ENCODE measurements at regions of chr12 and their contacts with region 1.

Region 1: DNA sequence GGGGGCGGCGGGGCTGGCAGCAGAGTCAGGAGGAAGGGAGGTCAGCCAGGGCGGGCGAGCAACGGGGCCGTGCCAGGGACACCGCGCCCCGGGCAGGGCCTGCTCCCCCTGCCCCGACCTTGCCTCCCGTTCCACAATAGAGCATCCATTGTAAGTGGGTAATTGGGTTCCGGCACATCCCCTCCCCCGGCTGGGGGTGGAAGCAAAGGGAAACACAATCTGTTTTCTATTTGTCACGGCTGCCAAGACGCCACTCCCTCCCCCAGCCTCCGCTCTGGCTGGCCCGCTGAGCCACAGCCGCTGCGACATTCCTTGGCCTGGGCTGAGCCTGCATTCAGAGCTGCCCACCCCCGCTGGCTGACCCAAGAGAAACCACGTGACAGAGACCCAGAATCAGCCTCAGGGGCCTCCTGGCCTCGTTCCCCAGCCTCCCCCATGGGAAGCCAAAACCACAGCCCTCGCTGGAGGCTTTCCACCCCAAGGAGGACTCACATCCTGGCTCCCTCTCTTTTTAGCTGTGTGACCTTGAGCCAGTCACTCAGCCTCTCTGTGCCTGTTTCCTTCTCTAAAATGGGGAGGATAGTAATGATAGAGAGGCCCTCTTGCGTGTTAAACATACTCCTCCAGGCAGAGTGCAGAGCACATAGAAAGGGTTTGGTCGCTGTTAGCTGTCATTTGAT is 117.6 kb downstream of the SCARB1 start:
- DNase-seq: peak; percentile 77 to 98
- H3K4me3 ChIP-seq: peak overlapping the region in 1 of 2 donors; percentile 2
- H3K27ac ChIP-seq: peak overlapping the region; percentile 83 to 89
- H3K4me1 ChIP-seq: peaks cover 8 to 12% of the 10 kb centered on the region in 2 donors
- H3K27me3 ChIP-seq: no peaks in the 10 kb centered on the region
- CTCF ChIP-seq: no peak

Region 2: DNA sequence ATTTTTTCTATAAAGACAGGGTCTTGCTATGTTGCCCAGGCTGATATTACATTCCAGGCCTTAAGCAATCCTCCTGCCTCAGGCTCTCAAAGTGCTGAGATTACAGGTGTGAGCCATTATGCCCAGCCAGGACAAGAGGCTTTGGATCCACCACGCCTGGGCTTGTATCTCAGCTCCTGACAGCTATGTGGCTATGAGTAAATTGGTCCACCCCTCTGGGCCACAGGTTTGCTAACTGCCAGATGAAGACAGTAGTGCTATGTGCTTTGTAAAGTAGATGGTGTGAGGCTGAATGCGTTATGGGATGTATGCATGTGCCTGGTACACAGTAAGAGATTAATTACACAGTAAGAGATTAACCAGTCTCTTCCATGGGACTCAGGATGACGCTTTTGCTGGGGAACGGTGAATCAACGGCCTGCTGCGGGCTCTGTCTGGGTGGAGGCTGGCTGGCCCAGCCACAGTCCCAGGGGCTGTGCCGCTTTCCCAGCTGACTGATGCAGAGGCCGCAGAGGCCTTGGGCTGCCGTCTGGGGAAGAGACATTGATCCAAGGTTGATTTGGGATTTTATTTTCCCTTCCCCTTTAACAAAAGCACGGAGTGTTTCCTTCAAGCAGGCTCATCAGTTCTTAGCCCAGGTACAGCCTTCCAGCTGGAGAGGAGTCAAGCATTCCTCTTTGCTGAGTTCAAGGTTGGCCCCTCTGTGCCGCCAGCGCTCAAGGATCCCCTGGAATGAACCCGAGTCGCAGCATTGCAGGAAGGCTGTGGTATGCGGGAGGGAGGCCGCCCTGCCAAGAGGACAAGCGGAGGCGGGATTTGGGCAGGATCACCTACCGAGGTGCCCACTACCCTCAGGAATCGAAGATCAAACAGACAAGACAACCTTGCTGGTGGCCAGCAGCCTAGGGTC is 125.0 kb before region 1 on chr12:
- intact Hi-C with region 1: loop called (anchors 5 kb)
- DNase-seq: peak; percentile 41 to 93
- H3K4me3 ChIP-seq: no peak overlapping the region
- H3K27ac ChIP-seq: peak overlapping the region; percentile 50 to 62
- H3K4me1 ChIP-seq: peaks cover 6 to 23% of the 10 kb centered on the region in 2 donors
- H3K27me3 ChIP-seq: no peaks in the 10 kb centered on the region
- CTCF ChIP-seq: no peak

Region 3: GRCh38 chr12:124694846-124695497 is 51.1 kb before region 1 on chr12:
- intact Hi-C with region 1: loop called (anchors 5 kb)
- DNase-seq: peak in 1 of 2 donors; percentile 83
- H3K4me3 ChIP-seq: no peak overlapping the region
- H3K27ac ChIP-seq: no peak overlapping the region
- H3K4me1 ChIP-seq: peaks cover 6 to 29% of the 10 kb centered on the region in 2 donors
- H3K27me3 ChIP-seq: no peaks in the 10 kb centered on the region
- CTCF ChIP-seq: no peak

Measured in ascending aorta (tissue), 2 donors.